Posterior vena cava (tissue), 2 donors: ENCODE measurements at regions of chr9 and their contacts with region 1.

Region 1: GRCh38 chr9:5450359-5451091 is at the start of gene CD274:
- DNase-seq: peak; percentile 96
- total RNA-seq, gene CD274: 3.1 to 3.5 TPM

Region 2: DNA sequence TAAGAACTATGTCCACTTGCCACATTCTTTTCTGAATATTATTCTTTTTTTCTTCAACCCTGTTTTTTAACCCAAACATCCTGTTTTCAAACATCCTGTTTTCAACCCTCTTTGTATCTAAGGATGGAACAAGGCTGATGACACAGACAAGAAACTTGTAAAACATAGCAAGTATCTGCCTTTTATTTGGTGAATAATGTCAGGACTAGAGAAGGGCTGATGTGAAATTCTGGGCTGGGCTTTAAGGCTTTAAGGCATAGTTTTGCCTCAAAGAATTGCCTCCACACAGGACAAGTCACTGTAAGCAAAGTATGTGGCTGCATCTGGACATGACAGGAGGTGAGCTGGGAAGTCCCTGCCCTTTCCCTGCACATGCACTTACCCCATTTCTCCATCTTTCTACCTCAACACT is 135.9 kb after region 1 on chr9:
- intact Hi-C with region 1: loop called in 1 of 2 experiments (anchors 5 kb)
- DNase-seq: no peak